ENCODE measurements at regions of chr3 and their contacts with region 1.

Region 1: DNA sequence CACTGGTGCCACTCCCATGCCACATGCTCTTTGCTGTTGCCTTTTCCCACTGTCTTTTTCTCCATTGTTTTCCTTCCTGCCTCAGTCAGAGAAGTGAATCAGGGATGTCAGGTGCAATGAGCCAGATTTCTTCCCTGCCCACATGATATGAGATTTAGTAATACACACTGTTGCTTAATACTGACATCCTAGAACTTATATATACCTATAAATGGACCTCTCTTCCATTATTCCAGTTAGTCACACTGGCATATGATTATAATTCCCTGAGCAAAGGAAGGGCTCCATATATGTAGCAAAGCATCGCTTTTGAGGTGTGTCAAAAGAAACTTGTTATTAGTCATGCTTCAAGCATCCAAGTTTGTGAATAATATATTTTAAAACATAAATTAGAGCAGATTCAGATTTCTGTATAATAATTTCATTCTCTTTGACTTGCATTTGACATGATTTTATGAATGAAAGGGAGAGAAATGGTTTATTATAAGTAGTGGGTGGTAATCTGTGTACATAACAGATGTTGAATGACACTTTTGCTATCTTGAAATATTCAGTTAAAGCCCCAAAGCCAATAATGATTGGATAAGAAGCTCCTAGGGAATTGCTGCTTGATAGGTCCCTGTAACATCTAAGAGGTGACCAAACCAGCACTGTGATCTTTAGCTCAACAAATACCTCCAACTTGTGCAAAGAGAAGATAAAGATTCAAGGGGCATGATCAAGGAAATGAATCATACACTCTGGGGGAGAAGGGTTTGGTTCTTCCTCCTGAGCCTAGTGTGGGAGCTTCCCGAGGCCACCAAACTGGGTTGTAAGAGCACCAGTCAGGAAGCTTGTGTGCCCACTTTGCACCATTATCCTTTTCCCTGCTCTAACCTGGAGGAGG is 48.6 kb downstream of the CHST2 start:
- DNase-seq: no peak
- ATAC-seq: no peak
- H3K4me3 Mint-ChIP-seq: no peak overlapping the region
- H3K27ac Mint-ChIP-seq: peak overlapping the region; percentile 34
- H3K4me1 Mint-ChIP-seq: peaks cover 86% of the 10 kb centered on the region
- H3K27me3 Mint-ChIP-seq: no peaks in the 10 kb centered on the region

Region 2: DNA sequence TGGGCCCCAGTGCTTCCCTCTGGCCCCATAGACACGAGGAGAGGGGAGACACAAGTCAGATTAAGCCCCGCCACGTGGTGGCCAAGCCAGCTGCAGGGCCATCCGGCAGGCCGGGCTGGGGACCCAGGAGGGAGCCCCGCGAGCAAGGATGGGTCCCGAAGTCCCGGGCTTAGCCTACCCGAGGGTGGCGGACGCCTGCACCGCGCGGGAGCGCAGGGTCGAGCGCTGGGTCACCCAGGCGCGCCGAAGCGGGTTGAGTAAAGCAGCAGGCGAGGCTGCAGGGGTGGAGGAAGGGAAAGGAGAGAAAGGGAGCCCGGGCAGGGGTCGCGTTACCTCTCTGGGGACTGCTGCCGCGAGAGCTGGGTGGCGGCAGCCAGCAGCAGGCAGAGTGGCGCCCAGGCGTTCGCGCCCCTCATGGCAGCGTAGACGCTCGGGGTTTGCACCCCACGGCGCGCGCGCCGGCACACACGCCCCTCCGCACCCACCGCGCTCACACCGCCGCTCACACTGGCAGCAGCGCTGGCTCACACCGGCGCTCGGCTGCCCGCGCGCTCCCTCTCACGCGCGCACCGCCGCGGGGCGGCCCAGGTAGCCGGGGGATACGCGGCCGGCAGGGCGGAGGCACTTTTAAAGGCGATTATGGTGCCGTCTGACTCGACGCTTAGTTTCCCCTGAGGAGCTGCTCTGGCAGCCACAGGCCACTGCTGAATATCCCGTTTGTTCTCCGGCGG is 279.6 kb before region 1 on chr3 and contains the start of gene PCOLCE2:
- CTCF ChIA-PET with region 1: no interaction called
- POLR2A ChIA-PET with region 1: no interaction called
- intact Hi-C with region 1: no loop called
- DNase-seq: peak; percentile 41
- ATAC-seq: peak; percentile 78
- H3K4me3 Mint-ChIP-seq: peak within 1 kb of the TSS; percentile 57
- H3K27ac Mint-ChIP-seq: no peak within 1 kb of the TSS
- H3K4me1 Mint-ChIP-seq: peaks cover 7% of the 10 kb centered on the region
- H3K27me3 Mint-ChIP-seq: peaks cover 40% of the 10 kb centered on the region
- total RNA-seq, gene PCOLCE2: 0.39 to 0.55 TPM

Region 3: GRCh38 chr3:143060906-143061305 is 107.3 kb before region 1 on chr3:
- CTCF ChIA-PET with region 1: interaction called, 3 read pairs
- POLR2A ChIA-PET with region 1: no interaction called
- intact Hi-C with region 1: loop called (anchors 1 to 5 kb)
- DNase-seq: no peak
- ATAC-seq: peak; percentile 95
- H3K4me3 Mint-ChIP-seq: no peak overlapping the region
- H3K27ac Mint-ChIP-seq: peak overlapping the region; percentile 70
- H3K4me1 Mint-ChIP-seq: peaks cover 26% of the 10 kb centered on the region
- H3K27me3 Mint-ChIP-seq: no peaks in the 10 kb centered on the region

Region 4: GRCh38 chr3:143081844-143082778 is 86.1 kb before region 1 on chr3:
- CTCF ChIA-PET with region 1: no interaction called
- POLR2A ChIA-PET with region 1: no interaction called
- intact Hi-C with region 1: loop called in 1 of 2 experiments (anchors 1 kb)
- DNase-seq: peak; percentile 54
- ATAC-seq: peak; percentile 87
- H3K4me3 Mint-ChIP-seq: peak overlapping the region; percentile 75
- H3K27ac Mint-ChIP-seq: peak overlapping the region; percentile 98
- H3K4me1 Mint-ChIP-seq: peaks cover 36% of the 10 kb centered on the region
- H3K27me3 Mint-ChIP-seq: no peaks in the 10 kb centered on the region

Region 5: DNA sequence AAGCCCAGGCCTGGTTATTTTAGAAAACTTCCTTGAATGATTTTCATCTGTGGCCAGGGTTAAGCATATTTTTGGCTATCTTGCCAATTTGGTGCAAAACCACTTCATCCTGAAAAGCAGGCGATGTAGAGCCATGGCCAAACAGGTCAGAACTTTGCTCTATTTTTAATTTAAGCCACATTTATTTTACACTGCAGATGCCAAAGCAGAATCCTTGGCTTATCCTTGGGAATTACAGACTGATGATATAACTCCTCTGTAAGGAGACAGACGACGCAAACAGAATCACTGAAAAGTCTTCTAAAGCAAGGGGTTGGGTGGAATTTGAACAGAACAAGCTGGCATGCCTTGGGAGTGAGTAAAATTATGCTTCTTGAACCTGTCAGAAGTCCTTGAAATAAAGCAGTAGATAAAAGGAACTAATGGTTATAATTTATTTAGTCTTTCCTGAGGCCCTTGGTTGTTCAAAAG is 73.3 kb after region 1 on chr3:
- CTCF ChIA-PET with region 1: no interaction called
- POLR2A ChIA-PET with region 1: no interaction called
- intact Hi-C with region 1: no loop called
- DNase-seq: no peak
- ATAC-seq: no peak
- H3K4me3 Mint-ChIP-seq: no peak overlapping the region
- H3K27ac Mint-ChIP-seq: no peak overlapping the region
- H3K4me1 Mint-ChIP-seq: peaks cover 8% of the 10 kb centered on the region
- H3K27me3 Mint-ChIP-seq: no peaks in the 10 kb centered on the region

Region 6: GRCh38 chr3:143276592-143276991 is 108.4 kb after region 1 on chr3:
- CTCF ChIA-PET with region 1: no interaction called
- POLR2A ChIA-PET with region 1: interaction called, 3 read pairs
- intact Hi-C with region 1: loop called (anchors 1 to 5 kb)
- DNase-seq: no peak
- ATAC-seq: peak; percentile 99
- H3K4me3 Mint-ChIP-seq: no peak overlapping the region
- H3K27ac Mint-ChIP-seq: no peak overlapping the region
- H3K4me1 Mint-ChIP-seq: peaks cover 23% of the 10 kb centered on the region
- H3K27me3 Mint-ChIP-seq: no peaks in the 10 kb centered on the region

Region 7: DNA sequence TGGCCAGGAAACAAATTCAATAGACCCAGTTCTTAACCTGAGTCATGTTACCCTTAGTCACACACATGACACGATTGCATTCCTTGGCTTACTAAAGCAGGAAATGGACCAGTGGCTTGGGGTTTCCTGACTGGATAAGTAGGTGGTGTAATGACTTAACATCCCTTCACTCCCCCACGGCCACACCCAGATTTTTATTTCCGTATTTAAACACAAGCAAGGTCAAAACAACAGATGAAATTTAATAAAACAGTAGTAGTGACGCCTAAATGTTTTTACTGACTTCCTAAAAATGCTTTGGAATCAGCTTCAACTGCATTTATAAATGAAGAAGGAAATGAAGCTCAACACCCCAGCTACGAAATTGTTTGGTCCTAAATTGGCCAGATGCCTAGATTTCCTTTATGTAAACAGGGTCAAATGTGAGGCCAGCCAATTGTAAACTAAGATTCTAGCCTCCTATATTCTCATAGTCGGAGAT is 275.7 kb after region 1 on chr3:
- CTCF ChIA-PET with region 1: no interaction called
- POLR2A ChIA-PET with region 1: no interaction called
- intact Hi-C with region 1: loop called in 1 of 2 experiments (anchors 5 kb)
- DNase-seq: peak; percentile 42
- ATAC-seq: peak; percentile 71
- H3K4me3 Mint-ChIP-seq: no peak overlapping the region
- H3K27ac Mint-ChIP-seq: peak overlapping the region; percentile 38
- H3K4me1 Mint-ChIP-seq: peaks cover 32% of the 10 kb centered on the region
- H3K27me3 Mint-ChIP-seq: no peaks in the 10 kb centered on the region

Region 8: GRCh38 chr3:143525408-143525807 is 357.2 kb after region 1 on chr3:
- CTCF ChIA-PET with region 1: no interaction called
- POLR2A ChIA-PET with region 1: no interaction called
- intact Hi-C with region 1: no loop called
- DNase-seq: no peak
- ATAC-seq: no peak
- H3K4me3 Mint-ChIP-seq: no peak overlapping the region
- H3K27ac Mint-ChIP-seq: no peak overlapping the region
- H3K4me1 Mint-ChIP-seq: peaks cover 10% of the 10 kb centered on the region
- H3K27me3 Mint-ChIP-seq: no peaks in the 10 kb centered on the region

Region 9: GRCh38 chr3:143535994-143536784 is 368.0 kb after region 1 on chr3:
- CTCF ChIA-PET with region 1: no interaction called
- POLR2A ChIA-PET with region 1: no interaction called
- intact Hi-C with region 1: loop called (anchors 1 kb)
- DNase-seq: no peak
- ATAC-seq: peak; percentile 88
- H3K4me3 Mint-ChIP-seq: no peak overlapping the region
- H3K27ac Mint-ChIP-seq: no peak overlapping the region
- H3K4me1 Mint-ChIP-seq: peaks cover 18% of the 10 kb centered on the region
- H3K27me3 Mint-ChIP-seq: no peaks in the 10 kb centered on the region

Region 10: DNA sequence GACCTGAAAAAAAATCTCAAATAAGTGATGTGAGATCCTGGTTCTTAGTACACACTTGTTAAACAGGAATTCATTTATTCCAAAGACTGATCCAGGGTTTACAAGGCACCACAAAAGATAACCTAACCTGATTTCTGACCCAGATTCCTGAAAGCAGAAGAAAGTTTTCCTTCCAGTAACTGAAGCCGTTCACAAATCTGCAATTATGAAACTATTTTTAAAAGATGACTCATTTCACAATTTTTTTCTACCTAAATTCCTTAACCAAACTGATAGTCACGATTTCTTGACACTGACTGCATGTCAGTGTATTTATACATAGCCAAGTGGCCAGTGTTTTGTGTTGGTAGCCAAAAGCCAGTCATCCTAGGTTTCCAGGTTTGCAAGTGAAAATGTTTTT is 663.0 kb after region 1 on chr3:
- CTCF ChIA-PET with region 1: no interaction called
- POLR2A ChIA-PET with region 1: no interaction called
- intact Hi-C with region 1: loop called in 1 of 2 experiments (anchors 10 kb)
- DNase-seq: no peak
- ATAC-seq: peak; percentile 44
- H3K4me3 Mint-ChIP-seq: no peak overlapping the region
- H3K27ac Mint-ChIP-seq: no peak overlapping the region
- H3K4me1 Mint-ChIP-seq: peaks cover 48% of the 10 kb centered on the region
- H3K27me3 Mint-ChIP-seq: no peaks in the 10 kb centered on the region